CD8-positive, alpha-beta T cell (primary cell): ENCODE measurements at regions of chr9 and their contacts with region 1.

Region 1: DNA sequence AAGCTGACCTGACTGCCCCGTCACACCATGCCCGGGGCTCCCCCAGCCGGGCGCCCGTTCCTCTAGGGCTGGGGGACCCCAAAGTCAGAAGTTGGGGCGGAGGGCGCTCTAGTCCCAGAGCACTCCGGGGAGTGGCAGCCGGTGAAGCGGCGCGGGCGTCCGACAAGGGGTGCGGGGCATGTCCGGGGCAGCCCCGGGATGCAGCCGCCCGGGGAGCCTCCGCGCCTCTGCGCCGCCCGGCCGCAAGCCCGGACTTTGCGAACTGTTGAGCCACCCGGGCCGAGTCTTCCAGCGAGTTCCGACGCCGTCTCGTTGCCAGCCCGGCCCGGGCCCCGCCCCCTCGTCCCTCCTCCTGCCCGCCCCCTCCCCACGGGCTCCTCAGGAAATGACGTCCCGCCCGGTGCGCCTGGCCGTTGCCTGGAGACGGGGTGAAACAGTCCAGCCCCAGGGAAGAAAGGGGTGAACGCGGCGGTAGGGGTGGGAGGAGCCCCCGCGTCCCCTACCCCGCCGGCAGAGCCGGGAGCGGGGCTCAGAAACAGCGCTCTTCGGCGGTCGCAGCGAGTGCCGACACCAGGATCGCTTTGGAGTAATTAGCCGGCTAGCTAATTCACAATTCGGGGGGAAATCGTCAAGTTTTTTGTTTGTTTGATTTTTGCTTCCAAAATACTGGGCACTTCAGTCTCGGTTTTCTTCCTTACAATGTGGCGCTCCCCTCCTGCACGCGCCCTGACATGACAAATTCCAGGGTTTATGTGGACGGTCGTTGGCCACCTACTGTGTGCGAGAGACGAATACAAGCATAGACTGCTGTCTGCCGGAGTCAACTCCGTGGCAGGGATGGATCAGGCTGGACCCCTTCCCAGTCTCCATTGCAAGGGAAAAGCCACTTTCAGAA is at the start of gene WHRN:
- DNase-seq: peak; percentile 84 to 96 (median 91)
- ATAC-seq: peak; percentile 82
- H3K4me3 ChIP-seq: peak within 1 kb of the TSS; percentile 51 to 64
- H3K4me3 Mint-ChIP-seq: peak within 1 kb of the TSS; percentile 86
- H3K27ac ChIP-seq: peak within 1 kb of the TSS; percentile 33 to 45
- H3K27ac Mint-ChIP-seq: peak within 1 kb of the TSS; percentile 77
- H3K4me1 ChIP-seq: peaks cover 13% of the 10 kb centered on the region
- H3K4me1 Mint-ChIP-seq: peaks cover 34% of the 10 kb centered on the region
- H3K27me3 ChIP-seq: peaks cover 0 to 14% of the 10 kb centered on the region in 2 experiments
- H3K27me3 Mint-ChIP-seq: peaks cover 30% of the 10 kb centered on the region
- CTCF ChIP-seq: no peak
- total RNA-seq, gene WHRN: 41.9 to 45.5 TPM

Region 2: DNA sequence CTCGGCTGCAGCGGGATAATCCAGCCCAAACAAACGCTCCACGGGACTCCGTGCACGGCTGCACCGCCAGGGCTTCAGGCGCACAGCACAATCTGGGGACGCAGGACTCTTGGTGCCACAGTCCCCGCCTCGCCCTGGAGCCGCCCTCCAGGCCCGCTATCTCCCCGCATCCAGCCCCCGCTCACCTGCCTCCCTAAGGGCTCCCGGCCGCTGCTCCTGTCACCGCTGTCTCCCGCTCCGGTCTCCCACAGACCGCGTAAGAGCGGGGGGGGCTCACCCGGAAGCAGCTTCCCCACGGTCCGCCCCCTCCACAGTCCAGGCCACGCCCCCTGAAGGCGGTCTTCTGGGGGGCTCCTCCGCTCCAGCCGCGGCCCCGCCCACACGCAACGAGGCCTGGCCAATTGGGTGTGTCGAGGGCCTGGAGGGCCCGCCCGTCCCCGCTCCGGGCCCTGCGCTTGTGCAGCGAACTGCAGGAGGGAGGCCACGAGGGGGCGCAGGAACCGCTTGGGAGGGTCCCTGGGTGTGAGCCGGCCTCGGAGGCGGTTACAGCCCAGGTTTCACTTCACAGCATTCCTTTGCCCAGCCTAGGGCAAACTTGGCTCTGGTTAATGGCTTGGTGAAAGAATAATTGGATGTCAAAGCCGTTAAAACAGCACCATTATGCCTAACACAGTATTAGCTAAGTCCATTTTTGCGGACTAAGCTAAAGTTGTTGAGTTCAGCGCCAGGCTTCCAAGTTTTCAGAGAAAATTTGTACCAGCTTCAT is 1104.2 kb before region 1 on chr9 and contains the start of gene ALAD:
- CTCF ChIA-PET with region 1: no interaction called
- POLR2A ChIA-PET with region 1: no interaction called
- intact Hi-C with region 1: loop called in 1 of 2 experiments (anchors 10 kb)
- DNase-seq: peak; percentile 98 to 100 (median 100)
- ATAC-seq: peak; percentile 99
- H3K4me3 ChIP-seq: peak within 1 kb of the TSS; percentile 80 to 81
- H3K4me3 Mint-ChIP-seq: peak within 1 kb of the TSS; percentile 97
- H3K27ac ChIP-seq: peak within 1 kb of the TSS; percentile 53
- H3K27ac Mint-ChIP-seq: peak within 1 kb of the TSS; percentile 92
- H3K4me1 ChIP-seq: peaks cover 16% of the 10 kb centered on the region
- H3K4me1 Mint-ChIP-seq: peaks cover 28% of the 10 kb centered on the region
- H3K27me3 ChIP-seq: no peaks in the 10 kb centered on the region
- H3K27me3 Mint-ChIP-seq: no peaks in the 10 kb centered on the region
- CTCF ChIP-seq: peak; percentile 94
- total RNA-seq, gene ALAD: 11.2 to 11.5 TPM

Region 3: GRCh38 chr9:114155263-114155972 is 350.0 kb before region 1 on chr9 and contains the start of gene COL27A1:
- CTCF ChIA-PET with region 1: no interaction called
- POLR2A ChIA-PET with region 1: no interaction called
- intact Hi-C with region 1: loop called in 1 of 2 experiments (anchors 10 kb)
- DNase-seq: peak; percentile 60 to 86 (median 75)
- ATAC-seq: peak; percentile 87
- H3K4me3 ChIP-seq: peak within 1 kb of the TSS; percentile 39 to 45
- H3K4me3 Mint-ChIP-seq: peak within 1 kb of the TSS; percentile 91
- H3K27ac ChIP-seq: no peak within 1 kb of the TSS
- H3K27ac Mint-ChIP-seq: peak within 1 kb of the TSS; percentile 19
- H3K4me1 ChIP-seq: peaks cover 19% of the 10 kb centered on the region
- H3K4me1 Mint-ChIP-seq: peaks cover 21% of the 10 kb centered on the region
- H3K27me3 ChIP-seq: peaks cover 8 to 19% of the 10 kb centered on the region in 2 experiments
- H3K27me3 Mint-ChIP-seq: peaks cover 46% of the 10 kb centered on the region
- CTCF ChIP-seq: peak; percentile 78
- total RNA-seq, gene COL27A1: 0.35 to 0.36 TPM

Region 4: GRCh38 chr9:114339130-114339908 is 166.1 kb before region 1 on chr9:
- CTCF ChIA-PET with region 1: interaction called, 3 read pairs
- POLR2A ChIA-PET with region 1: no interaction called
- intact Hi-C with region 1: loop called (anchors 2 kb)
- DNase-seq: peak; percentile 27 to 76 (median 52)
- ATAC-seq: peak; percentile 65
- H3K4me3 ChIP-seq: no peak overlapping the region
- H3K4me3 Mint-ChIP-seq: no peak overlapping the region
- H3K27ac ChIP-seq: peak overlapping the region in 1 of 2 experiments; percentile 40
- H3K27ac Mint-ChIP-seq: peak overlapping the region; percentile 45
- H3K4me1 ChIP-seq: no peaks in the 10 kb centered on the region
- H3K4me1 Mint-ChIP-seq: peaks cover 34% of the 10 kb centered on the region
- H3K27me3 ChIP-seq: no peaks in the 10 kb centered on the region
- H3K27me3 Mint-ChIP-seq: no peaks in the 10 kb centered on the region
- CTCF ChIP-seq: peak; percentile 83

Region 5: GRCh38 chr9:114487607-114488300 is 17.7 kb before region 1 on chr9:
- CTCF ChIA-PET with region 1: interaction called, 56 read pairs
- POLR2A ChIA-PET with region 1: interaction called, 3 read pairs
- intact Hi-C with region 1: loop called (anchors 1 kb)
- DNase-seq: peak; percentile 25 to 83 (median 64)
- ATAC-seq: peak; percentile 85
- H3K4me3 ChIP-seq: no peak overlapping the region
- H3K4me3 Mint-ChIP-seq: no peak overlapping the region
- H3K27ac ChIP-seq: no peak overlapping the region
- H3K27ac Mint-ChIP-seq: no peak overlapping the region
- H3K4me1 ChIP-seq: peaks cover 6% of the 10 kb centered on the region
- H3K4me1 Mint-ChIP-seq: peaks cover 11% of the 10 kb centered on the region
- H3K27me3 ChIP-seq: no peaks in the 10 kb centered on the region
- H3K27me3 Mint-ChIP-seq: no peaks in the 10 kb centered on the region
- CTCF ChIP-seq: peak; percentile 94